Naive thymus-derived CD4-positive, alpha-beta T cell (primary cell): ENCODE measurements at regions of chr7 and their contacts with region 1.

Region 1: GRCh38 chr7:92880212-92881090 is 44.1 kb upstream of the CDK6 start:
- DNase-seq: no peak
- ATAC-seq: peak; percentile 42
- H3K4me3 ChIP-seq: no peak overlapping the region
- H3K4me3 Mint-ChIP-seq: no peak overlapping the region
- H3K27ac ChIP-seq: no peak overlapping the region
- H3K27ac Mint-ChIP-seq: no peak overlapping the region
- H3K4me1 ChIP-seq: peaks cover 0 to 9% of the 10 kb centered on the region in 2 donors
- H3K4me1 Mint-ChIP-seq: peaks cover 8 to 33% (median 25%) of the 10 kb centered on the region in 7 donors
- H3K27me3 ChIP-seq: no peaks in the 10 kb centered on the region
- H3K27me3 Mint-ChIP-seq: peaks cover 0 to 7% (median 0%) of the 10 kb centered on the region in 5 donors

Region 2: GRCh38 chr7:92119213-92119759 is 761.2 kb before region 1 on chr7:
- CTCF ChIA-PET with region 1: no interaction called
- POLR2A ChIA-PET with region 1: no interaction called
- intact Hi-C with region 1: no loop called
- DNase-seq: no peak
- ATAC-seq: no peak
- H3K4me3 ChIP-seq: no peak overlapping the region
- H3K4me3 Mint-ChIP-seq: no peak overlapping the region
- H3K27ac ChIP-seq: no peak overlapping the region
- H3K27ac Mint-ChIP-seq: peak overlapping the region in 2 of 9 donors; percentile 32 to 42
- H3K4me1 ChIP-seq: no peaks in the 10 kb centered on the region
- H3K4me1 Mint-ChIP-seq: peaks cover 0 to 14% (median 4%) of the 10 kb centered on the region in 7 donors
- H3K27me3 ChIP-seq: no peaks in the 10 kb centered on the region
- H3K27me3 Mint-ChIP-seq: no peaks in the 10 kb centered on the region

Region 3: GRCh38 chr7:92691578-92691977 is 188.9 kb before region 1 on chr7:
- CTCF ChIA-PET with region 1: no interaction called
- POLR2A ChIA-PET with region 1: no interaction called
- intact Hi-C with region 1: loop called in 1 of 2 experiments (anchors 1 kb)
- DNase-seq: peak in 7 of 9 donors; percentile 33 to 59 (median 41)
- ATAC-seq: peak; percentile 93
- H3K4me3 ChIP-seq: no peak overlapping the region
- H3K4me3 Mint-ChIP-seq: peak overlapping the region in 4 of 10 donors; percentile 18 to 50 (median 20)
- H3K27ac ChIP-seq: no peak overlapping the region
- H3K27ac Mint-ChIP-seq: peak overlapping the region in 8 of 9 donors; percentile 1 to 75 (median 58)
- H3K4me1 ChIP-seq: peaks cover 12 to 15% of the 10 kb centered on the region in 2 donors
- H3K4me1 Mint-ChIP-seq: peaks cover 7 to 74% (median 38%) of the 10 kb centered on the region in 7 donors
- H3K27me3 ChIP-seq: no peaks in the 10 kb centered on the region
- H3K27me3 Mint-ChIP-seq: no peaks in the 10 kb centered on the region

Region 4: DNA sequence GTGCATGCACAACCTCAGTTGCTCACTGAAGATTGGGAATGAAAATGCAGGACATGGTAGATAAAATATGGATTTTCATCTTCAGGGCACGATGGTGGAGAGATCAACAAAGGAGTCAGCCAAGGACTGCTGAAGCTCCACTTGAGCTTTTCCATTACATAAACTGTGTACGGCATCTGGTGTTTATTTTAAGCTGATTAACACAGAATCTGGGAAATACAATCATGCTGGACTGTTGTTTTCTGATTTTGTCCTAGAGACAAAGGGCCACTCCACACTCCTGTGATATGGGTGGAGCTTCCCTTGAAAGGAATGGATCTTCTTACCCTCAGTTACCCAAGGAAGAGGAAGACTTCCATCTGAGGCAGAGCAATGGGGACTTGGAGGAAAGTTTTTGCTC is 116.7 kb after region 1 on chr7:
- CTCF ChIA-PET with region 1: no interaction called
- POLR2A ChIA-PET with region 1: no interaction called
- intact Hi-C with region 1: no loop called
- DNase-seq: no peak
- ATAC-seq: no peak
- H3K4me3 ChIP-seq: no peak overlapping the region
- H3K4me3 Mint-ChIP-seq: no peak overlapping the region
- H3K27ac ChIP-seq: no peak overlapping the region
- H3K27ac Mint-ChIP-seq: no peak overlapping the region
- H3K4me1 ChIP-seq: no peaks in the 10 kb centered on the region
- H3K4me1 Mint-ChIP-seq: peaks cover 0 to 3% (median 0%) of the 10 kb centered on the region in 7 donors
- H3K27me3 ChIP-seq: no peaks in the 10 kb centered on the region
- H3K27me3 Mint-ChIP-seq: peaks cover 4 to 21% (median 10%) of the 10 kb centered on the region in 5 donors

Region 5: DNA sequence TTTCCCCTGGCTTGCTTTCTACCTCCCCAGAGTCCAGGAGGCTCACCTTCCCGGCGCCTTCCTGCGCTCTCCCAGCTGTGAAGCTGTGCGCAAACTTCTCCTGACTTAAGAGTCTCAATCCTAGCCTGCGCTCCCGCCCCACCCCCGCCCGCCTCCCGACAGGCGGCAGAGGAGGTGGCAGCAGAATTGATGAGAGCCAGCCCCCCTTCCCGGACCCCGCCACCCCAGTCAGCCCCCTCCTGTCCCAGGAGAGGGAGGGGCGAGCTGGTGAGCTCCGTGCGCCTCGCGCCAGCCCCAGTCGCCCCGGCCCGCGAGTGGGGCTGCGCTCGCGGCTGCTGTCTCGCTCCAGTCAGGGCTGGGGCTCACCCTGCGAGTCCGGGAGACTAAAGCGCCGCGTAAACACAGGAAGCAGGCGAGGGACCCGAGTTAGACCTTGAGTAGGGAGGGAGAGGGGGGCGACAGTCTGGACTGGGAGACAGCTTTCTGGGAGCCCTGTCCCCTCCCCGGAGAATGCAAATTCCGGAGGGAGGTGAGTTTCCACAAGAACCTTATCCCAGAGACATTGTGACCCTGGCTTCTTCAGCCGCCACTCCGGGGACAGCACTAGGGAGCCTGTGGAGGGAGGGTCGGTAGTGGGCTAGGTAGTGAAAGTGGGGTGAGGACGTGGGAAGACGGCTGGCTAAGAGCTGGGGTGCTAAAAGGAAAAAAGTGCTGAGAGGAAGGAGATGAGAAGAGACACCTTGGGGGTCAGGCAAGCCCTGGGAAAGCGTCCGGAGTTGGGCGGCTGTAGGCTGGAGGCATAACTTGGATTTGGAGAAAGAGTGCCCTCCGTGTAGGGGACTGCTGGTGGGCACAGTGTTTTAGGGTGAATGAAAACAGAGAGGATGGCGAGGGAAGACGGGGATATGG is 694.4 kb after region 1 on chr7 and contains the start of gene CALCR:
- CTCF ChIA-PET with region 1: no interaction called
- POLR2A ChIA-PET with region 1: no interaction called
- intact Hi-C with region 1: no loop called
- DNase-seq: no peak
- ATAC-seq: no peak
- H3K4me3 ChIP-seq: no peak within 1 kb of the TSS
- H3K4me3 Mint-ChIP-seq: no peak within 1 kb of the TSS
- H3K27ac ChIP-seq: no peak within 1 kb of the TSS
- H3K27ac Mint-ChIP-seq: no peak within 1 kb of the TSS
- H3K4me1 ChIP-seq: no peaks in the 10 kb centered on the region
- H3K4me1 Mint-ChIP-seq: peaks cover 0 to 2% (median 0%) of the 10 kb centered on the region in 7 donors
- H3K27me3 ChIP-seq: no peaks in the 10 kb centered on the region
- H3K27me3 Mint-ChIP-seq: peaks cover 20 to 47% (median 31%) of the 10 kb centered on the region in 5 donors
- total RNA-seq, gene CALCR: not detected